ENCODE measurements at regions of chrX and their contacts with region 1.

Region 1: GRCh38 chrX:37905436-37906147 is 58.2 kb upstream of the DYNLT3 start:
- DNase-seq: peak; percentile 59
- H3K4me3 Mint-ChIP-seq: peak overlapping the region; percentile 76
- H3K27ac Mint-ChIP-seq: no peak overlapping the region
- H3K4me1 Mint-ChIP-seq: peaks cover 17% of the 10 kb centered on the region
- H3K27me3 Mint-ChIP-seq: no peaks in the 10 kb centered on the region
- CTCF ChIP-seq: no peak

Region 2: DNA sequence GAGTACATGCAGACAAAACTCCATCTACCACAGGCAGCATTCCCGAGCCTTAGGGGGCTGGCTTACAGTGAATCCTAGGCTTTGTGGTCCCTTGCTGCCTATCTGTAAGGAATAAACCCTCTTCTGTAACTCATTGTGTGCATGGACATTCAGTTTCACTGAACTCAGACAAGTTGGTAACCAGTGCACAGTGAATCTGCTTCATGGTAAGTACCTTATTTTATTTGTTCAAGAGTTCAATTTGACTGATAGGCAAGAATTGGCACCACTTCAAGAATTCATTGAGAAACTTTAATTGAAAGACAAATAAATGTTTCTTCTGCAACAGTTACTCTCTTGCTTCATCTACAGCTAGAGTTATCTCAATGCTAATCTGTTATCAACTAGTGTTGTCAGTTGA is 613.7 kb before region 1 on chrX:
- CTCF ChIA-PET with region 1: no interaction called
- intact Hi-C with region 1: no loop called
- DNase-seq: no peak
- H3K4me3 Mint-ChIP-seq: no peak overlapping the region
- H3K27ac Mint-ChIP-seq: no peak overlapping the region
- H3K4me1 Mint-ChIP-seq: no peaks in the 10 kb centered on the region
- H3K27me3 Mint-ChIP-seq: no peaks in the 10 kb centered on the region
- CTCF ChIP-seq: no peak

Region 3: DNA sequence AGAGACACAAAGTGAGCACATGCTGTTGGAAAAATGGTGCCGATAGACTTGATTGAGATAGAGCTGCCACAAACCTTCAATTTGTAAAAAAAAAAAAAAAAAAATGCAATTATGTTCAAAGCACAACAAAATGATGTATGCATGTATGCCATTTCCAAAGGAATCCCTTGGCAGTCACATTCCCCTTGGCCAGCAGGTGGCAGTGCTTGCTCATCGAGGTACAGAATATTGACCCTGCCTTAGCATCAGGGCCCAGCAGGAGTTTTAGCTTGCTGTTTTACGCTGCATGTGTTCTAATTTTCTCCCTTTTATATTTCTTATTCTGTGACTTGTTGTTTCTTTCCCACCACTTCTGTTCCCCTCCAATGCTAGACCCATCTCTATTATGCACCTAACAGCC is 160.2 kb before region 1 on chrX:
- CTCF ChIA-PET with region 1: interaction called, 4 read pairs
- intact Hi-C with region 1: loop called (anchors 5 kb)
- DNase-seq: peak; percentile 76
- H3K4me3 Mint-ChIP-seq: no peak overlapping the region
- H3K27ac Mint-ChIP-seq: no peak overlapping the region
- H3K4me1 Mint-ChIP-seq: peaks cover 17% of the 10 kb centered on the region
- H3K27me3 Mint-ChIP-seq: no peaks in the 10 kb centered on the region
- CTCF ChIP-seq: peak; percentile 62

Region 4: GRCh38 chrX:37846934-37847732 is 58.5 kb before region 1 on chrX and contains the start of gene DYNLT3:
- CTCF ChIA-PET with region 1: no interaction called
- intact Hi-C with region 1: loop called (anchors 5 kb)
- DNase-seq: peak; percentile 86
- H3K4me3 Mint-ChIP-seq: peak within 1 kb of the TSS; percentile 70
- H3K27ac Mint-ChIP-seq: peak within 1 kb of the TSS; percentile 67
- H3K4me1 Mint-ChIP-seq: no peaks in the 10 kb centered on the region
- H3K27me3 Mint-ChIP-seq: no peaks in the 10 kb centered on the region
- CTCF ChIP-seq: no peak
- total RNA-seq, gene DYNLT3: 28.0 and 31.3 TPM in 2 replicates

Region 5: DNA sequence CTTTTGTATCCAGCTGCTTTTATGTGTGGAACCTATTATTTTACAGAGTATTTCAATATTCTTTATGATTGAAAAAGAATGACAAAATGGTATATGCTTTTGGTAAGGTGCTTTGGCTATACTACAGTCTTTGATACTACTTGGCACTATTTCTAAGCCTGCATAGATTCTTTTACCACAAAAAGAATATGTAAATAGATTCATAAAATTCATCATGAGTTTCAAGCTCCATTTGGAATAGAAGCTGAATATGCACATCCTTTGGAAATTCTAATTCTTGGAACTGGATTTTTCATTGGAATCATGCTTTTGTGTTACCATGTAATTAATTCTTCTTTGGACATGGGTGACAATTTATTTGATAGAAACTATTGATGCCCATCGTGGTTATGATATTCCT is 40.6 kb after region 1 on chrX:
- CTCF ChIA-PET with region 1: no interaction called
- intact Hi-C with region 1: no loop called
- DNase-seq: no peak
- H3K4me3 Mint-ChIP-seq: no peak overlapping the region
- H3K27ac Mint-ChIP-seq: no peak overlapping the region
- H3K4me1 Mint-ChIP-seq: no peaks in the 10 kb centered on the region
- H3K27me3 Mint-ChIP-seq: no peaks in the 10 kb centered on the region
- CTCF ChIP-seq: no peak

Measured in Calu3 (cell line).